ENCODE measurements at regions of chr16 and their contacts with region 1.

Region 1: DNA sequence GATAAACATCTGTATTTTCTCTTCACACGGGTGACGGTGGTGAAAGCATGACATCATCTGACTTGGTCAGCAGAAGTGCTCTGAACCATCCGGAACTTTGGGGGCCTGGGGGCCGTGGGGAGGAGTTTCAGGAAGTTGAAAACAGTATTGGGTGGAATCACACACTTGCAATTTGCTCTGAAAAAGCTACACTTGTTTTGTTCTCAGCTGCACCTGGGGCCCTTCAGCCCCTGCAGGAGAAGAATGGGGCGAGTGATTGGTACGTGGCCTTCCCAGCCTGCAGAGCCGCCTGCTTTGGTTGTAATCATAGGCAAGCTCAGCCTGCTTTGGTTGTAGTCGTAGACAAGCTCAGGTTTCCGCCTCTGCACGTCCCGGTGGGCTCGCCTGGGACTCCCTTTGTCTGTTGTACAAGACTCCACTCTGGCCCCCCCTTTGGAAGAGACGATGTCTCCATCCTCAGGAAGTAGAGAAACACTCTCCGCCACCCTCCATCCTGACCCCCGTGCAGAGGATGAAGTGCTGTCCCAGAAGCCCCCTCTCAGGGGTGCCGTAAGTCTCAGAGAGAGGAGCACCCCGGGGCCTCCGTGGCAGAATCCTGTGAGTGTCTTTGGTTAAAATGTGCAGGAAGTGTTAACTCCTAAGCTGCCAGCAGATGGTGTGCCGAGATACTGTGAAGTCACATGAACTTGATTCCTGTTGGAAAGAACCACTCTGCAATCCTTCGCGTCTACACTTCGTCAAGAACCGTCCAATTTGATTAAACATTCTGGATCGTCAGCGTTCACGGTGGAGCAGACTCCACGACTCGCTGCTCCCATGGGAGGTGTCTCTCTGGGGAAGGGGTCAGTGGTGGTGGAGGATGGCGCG is 5.4 kb downstream of the BANP start:
- DNase-seq: peak; percentile 51
- ATAC-seq: peak; percentile 52
- H3K4me3 Mint-ChIP-seq: peak overlapping the region; percentile 79
- H3K27ac Mint-ChIP-seq: peak overlapping the region; percentile 91
- H3K4me1 Mint-ChIP-seq: peaks cover 92% of the 10 kb centered on the region
- H3K27me3 Mint-ChIP-seq: no peaks in the 10 kb centered on the region
- CTCF ChIP-seq: no peak

Region 2: GRCh38 chr16:88069397-88070168 is 113.0 kb after region 1 on chr16:
- CTCF ChIA-PET with region 1: no interaction called
- POLR2A ChIA-PET with region 1: interaction called, 3 read pairs
- intact Hi-C with region 1: loop called (anchors 1 kb)
- DNase-seq: peak; percentile 79
- ATAC-seq: peak; percentile 93
- H3K4me3 Mint-ChIP-seq: peak overlapping the region; percentile 74
- H3K27ac Mint-ChIP-seq: peak overlapping the region; percentile 96
- H3K4me1 Mint-ChIP-seq: peaks cover 50% of the 10 kb centered on the region
- H3K27me3 Mint-ChIP-seq: no peaks in the 10 kb centered on the region
- CTCF ChIP-seq: no peak